ENCODE measurements at regions of chr4 and their contacts with region 1.

Region 1: DNA sequence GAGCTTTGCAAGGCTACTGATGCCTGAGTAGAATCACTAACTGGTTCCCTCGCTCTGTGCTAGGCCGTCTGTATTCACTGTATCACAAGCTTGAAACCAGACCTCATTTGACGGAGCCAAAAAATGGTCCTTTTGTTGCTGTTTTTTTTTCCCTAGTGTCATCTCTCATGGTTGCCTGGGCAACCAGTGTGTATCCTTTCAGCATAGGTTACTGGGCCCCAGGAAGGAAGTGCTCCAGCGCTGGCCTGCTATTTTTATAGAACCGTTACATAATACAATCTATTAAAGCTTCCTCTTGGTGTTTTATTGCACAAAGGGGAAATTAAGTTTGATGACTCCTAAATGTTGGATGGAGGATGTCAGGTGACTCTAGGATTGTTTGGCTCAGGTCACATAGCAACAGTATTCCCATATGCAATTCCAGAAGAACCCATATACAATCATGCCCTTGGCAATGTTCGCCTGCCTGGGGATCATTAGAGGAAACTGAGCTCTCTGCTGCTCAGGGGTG is 220.4 kb downstream of the SPRY1 start:
- DNase-seq: peak; percentile 1 to 91 (median 49)
- ATAC-seq: peak; percentile 93
- H3K4me3 ChIP-seq: no peak overlapping the region
- H3K4me3 Mint-ChIP-seq: peak overlapping the region; percentile 23
- H3K27ac ChIP-seq: peak overlapping the region; percentile 31 to 59
- H3K27ac Mint-ChIP-seq: peak overlapping the region; percentile 87
- H3K4me1 ChIP-seq: peaks cover 16% of the 10 kb centered on the region
- H3K4me1 Mint-ChIP-seq: peaks cover 24% of the 10 kb centered on the region
- H3K27me3 ChIP-seq: no peaks in the 10 kb centered on the region
- H3K27me3 Mint-ChIP-seq: no peaks in the 10 kb centered on the region
- CTCF ChIP-seq: no peak

Region 2: DNA sequence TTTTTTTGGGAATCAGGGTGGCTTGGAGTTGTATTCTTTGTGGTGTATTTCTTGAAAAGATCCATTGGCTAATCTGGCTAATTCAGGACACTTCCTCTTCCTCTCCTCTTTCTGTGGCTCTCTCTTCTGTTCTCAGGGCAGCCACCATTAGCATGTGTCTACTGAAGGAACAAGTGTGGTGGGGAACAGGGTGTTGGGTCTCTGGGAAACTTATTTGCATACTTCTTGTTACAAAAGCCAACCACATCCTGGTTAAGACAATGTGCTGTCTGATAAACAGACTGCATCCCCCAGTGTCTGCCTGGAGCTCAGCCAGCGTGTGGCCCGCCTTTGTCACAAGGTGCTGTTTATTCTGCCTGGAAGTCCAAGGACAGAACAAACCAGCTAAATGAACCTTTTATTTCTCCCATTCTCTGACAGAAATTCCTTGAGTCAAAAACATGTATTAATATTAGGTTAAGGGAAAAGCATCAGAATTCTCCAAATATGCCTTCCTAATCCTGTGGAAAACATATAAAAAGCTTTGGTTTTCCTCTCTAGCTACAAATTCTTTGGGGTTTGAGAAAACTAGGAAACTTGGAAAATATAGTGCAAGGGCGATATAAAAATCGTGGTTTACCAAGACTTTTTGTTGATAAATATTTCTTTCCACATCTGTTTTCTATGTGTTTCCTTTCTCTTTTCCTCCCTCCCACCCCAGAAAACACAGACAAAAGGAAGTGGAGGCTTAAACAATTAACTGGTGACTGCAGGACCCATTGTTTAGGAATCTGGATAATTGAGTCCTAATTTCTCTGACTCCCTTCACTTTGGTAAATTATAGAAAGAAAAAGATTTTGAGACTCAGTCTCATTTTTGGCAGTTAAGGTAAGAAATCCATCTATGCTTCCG is 16.8 kb before region 1 on chr4:
- CTCF ChIA-PET with region 1: interaction called, 3 read pairs
- POLR2A ChIA-PET with region 1: interaction called, 4 read pairs
- intact Hi-C with region 1: loop called in 1 of 2 experiments (anchors 1 kb)
- DNase-seq: peak; percentile 25 to 88 (median 65)
- ATAC-seq: peak; percentile 97
- H3K4me3 ChIP-seq: no peak overlapping the region
- H3K4me3 Mint-ChIP-seq: peak overlapping the region; percentile 51
- H3K27ac ChIP-seq: peak overlapping the region in 1 of 2 experiments; percentile 54
- H3K27ac Mint-ChIP-seq: peak overlapping the region; percentile 95
- H3K4me1 ChIP-seq: peaks cover 26% of the 10 kb centered on the region
- H3K4me1 Mint-ChIP-seq: peaks cover 57% of the 10 kb centered on the region
- H3K27me3 ChIP-seq: no peaks in the 10 kb centered on the region
- H3K27me3 Mint-ChIP-seq: no peaks in the 10 kb centered on the region
- CTCF ChIP-seq: no peak